Activated CD4-positive, alpha-beta memory T cell treated with anti-CD3 and anti-CD28 coated beads for 36 hours (primary cell): ENCODE measurements at regions of chr3 and their contacts with region 1.

Region 1: GRCh38 chr3:32428092-32429068 is 36.7 kb downstream of the CMTM7 start:
- DNase-seq: peak; percentile 41
- H3K4me3 Mint-ChIP-seq: peak overlapping the region; percentile 57
- H3K27ac Mint-ChIP-seq: peak overlapping the region; percentile 84
- H3K4me1 Mint-ChIP-seq: peaks cover 93% of the 10 kb centered on the region
- H3K27me3 Mint-ChIP-seq: no peaks in the 10 kb centered on the region

Region 2: GRCh38 chr3:32391643-32392535 is 36.5 kb before region 1 on chr3 and contains the start of gene CMTM7:
- CTCF ChIA-PET with region 1: interaction called, 5 read pairs
- POLR2A ChIA-PET with region 1: interaction called, 6 read pairs
- intact Hi-C with region 1: loop called (anchors 5 kb)
- DNase-seq: peak; percentile 81
- H3K4me3 Mint-ChIP-seq: peak within 1 kb of the TSS; percentile 98
- H3K27ac Mint-ChIP-seq: peak within 1 kb of the TSS; percentile 95
- H3K4me1 Mint-ChIP-seq: peaks cover 55% of the 10 kb centered on the region
- H3K27me3 Mint-ChIP-seq: no peaks in the 10 kb centered on the region
- total RNA-seq, gene CMTM7: 46.1 to 47.1 TPM

Region 3: DNA sequence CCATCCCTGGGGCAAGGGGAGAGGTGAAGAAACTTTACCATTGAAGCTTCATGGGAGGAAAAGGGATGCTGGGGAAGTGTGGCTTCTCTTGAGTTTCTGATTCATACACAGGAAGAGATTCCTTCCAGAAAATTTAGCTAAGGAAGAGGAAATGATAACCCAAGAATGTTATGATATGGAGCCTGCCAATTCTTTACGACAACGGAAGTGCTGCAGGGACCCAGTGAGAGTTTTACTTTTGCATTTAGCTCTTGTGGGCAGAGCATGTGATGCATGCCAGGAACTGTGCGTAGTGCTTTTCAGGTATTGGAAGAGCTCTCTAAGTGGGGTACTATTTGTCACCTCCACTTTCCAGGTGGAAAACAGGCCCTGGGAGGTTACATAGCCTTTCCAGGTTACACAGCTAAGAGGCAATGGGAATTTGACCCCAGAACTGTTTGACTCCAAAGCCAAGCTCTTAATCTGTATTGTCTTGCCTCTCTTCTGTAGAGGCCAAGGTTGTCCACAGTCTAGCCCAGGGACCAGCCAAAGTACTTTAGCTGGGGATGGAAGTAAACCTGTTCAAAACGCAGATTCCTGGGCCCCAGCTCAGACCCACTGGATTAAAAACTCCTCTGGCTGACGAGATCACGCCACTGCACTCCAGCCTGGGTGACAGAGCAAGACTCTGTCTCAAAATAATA is 13.7 kb before region 1 on chr3:
- CTCF ChIA-PET with region 1: interaction called, 7 read pairs
- POLR2A ChIA-PET with region 1: interaction called, 3 read pairs
- intact Hi-C with region 1: loop called (anchors 2 kb)
- DNase-seq: peak; percentile 68
- H3K4me3 Mint-ChIP-seq: peak overlapping the region; percentile 49
- H3K27ac Mint-ChIP-seq: peak overlapping the region; percentile 94
- H3K4me1 Mint-ChIP-seq: peaks cover 65% of the 10 kb centered on the region
- H3K27me3 Mint-ChIP-seq: no peaks in the 10 kb centered on the region

Region 4: GRCh38 chr3:32484436-32484835 is 56.1 kb after region 1 on chr3:
- CTCF ChIA-PET with region 1: no interaction called
- POLR2A ChIA-PET with region 1: no interaction called
- intact Hi-C with region 1: loop called (anchors 1 kb)
- DNase-seq: no peak
- H3K4me3 Mint-ChIP-seq: no peak overlapping the region
- H3K27ac Mint-ChIP-seq: no peak overlapping the region
- H3K4me1 Mint-ChIP-seq: peaks cover 26% of the 10 kb centered on the region
- H3K27me3 Mint-ChIP-seq: no peaks in the 10 kb centered on the region

Region 5: GRCh38 chr3:32758375-32758753 is 330.0 kb after region 1 on chr3:
- CTCF ChIA-PET with region 1: no interaction called
- POLR2A ChIA-PET with region 1: no interaction called
- intact Hi-C with region 1: no loop called
- DNase-seq: no peak
- H3K4me3 Mint-ChIP-seq: no peak overlapping the region
- H3K27ac Mint-ChIP-seq: no peak overlapping the region
- H3K4me1 Mint-ChIP-seq: peaks cover 4% of the 10 kb centered on the region
- H3K27me3 Mint-ChIP-seq: no peaks in the 10 kb centered on the region